ENCODE measurements at regions of chr17 and their contacts with region 1.

Region 1: GRCh38 chr17:67376737-67377487 is at the start of gene PITPNC1:
- DNase-seq: peak; percentile 82 to 90 (median 85)
- H3K4me3 ChIP-seq: peak within 1 kb of the TSS; percentile 84 to 94 (median 88)
- H3K27ac ChIP-seq: peak within 1 kb of the TSS; percentile 15 to 54
- H3K4me1 ChIP-seq: peaks cover 13 to 40% (median 39%) of the 10 kb centered on the region in 4 experiments
- H3K27me3 ChIP-seq: no peaks in the 10 kb centered on the region

Region 2: GRCh38 chr17:67366193-67367157 is 10.4 kb before region 1 on chr17 and contains the start of gene PSMD12:
- CTCF ChIA-PET with region 1: interaction called, 12 read pairs
- POLR2A ChIA-PET with region 1: interaction called, 5 read pairs
- DNase-seq: peak; percentile 90 to 94 (median 93)
- H3K4me3 ChIP-seq: peak within 1 kb of the TSS; percentile 87 to 99 (median 97)
- H3K27ac ChIP-seq: peak within 1 kb of the TSS; percentile 95 to 98
- H3K4me1 ChIP-seq: peaks cover 11 to 42% (median 32%) of the 10 kb centered on the region in 4 experiments
- H3K27me3 ChIP-seq: no peaks in the 10 kb centered on the region

Region 3: DNA sequence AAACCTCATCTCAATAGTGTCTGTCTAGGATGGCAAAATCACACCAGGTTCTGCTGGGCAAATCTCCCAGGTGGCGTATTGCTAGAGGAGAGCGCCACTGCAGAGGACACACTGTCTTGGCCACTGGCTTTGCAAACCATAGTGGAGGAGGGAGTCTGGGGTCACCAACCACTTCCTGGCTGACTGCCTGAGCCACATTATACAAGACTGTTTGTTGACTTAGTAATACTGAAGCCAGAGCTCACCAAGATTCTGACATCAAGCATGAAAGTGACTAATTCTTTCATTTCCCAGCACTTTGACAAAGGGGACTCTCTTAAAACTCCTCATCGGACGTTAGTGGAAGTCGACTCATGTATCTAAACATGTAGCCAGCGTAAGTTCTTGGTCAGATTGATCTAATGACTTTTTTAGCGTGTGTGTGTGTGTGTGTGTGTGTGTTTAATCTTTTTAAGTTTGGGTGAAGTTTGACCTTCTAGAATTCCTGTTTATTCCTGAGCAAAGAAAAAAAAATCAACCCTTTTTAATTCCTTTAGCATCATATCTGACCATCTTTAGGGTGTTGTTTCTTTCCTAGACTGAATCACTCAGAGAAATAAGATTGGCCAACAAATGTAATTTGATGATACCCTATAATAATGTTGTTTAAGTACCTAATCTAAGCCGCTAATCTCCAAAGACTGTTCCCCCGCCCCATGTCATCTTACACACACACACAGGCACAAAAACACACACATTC is 13.9 kb after region 1 on chr17:
- CTCF ChIA-PET with region 1: interaction called, 18 read pairs
- POLR2A ChIA-PET with region 1: no interaction called
- DNase-seq: peak in 2 of 3 donors; percentile 76 to 79
- H3K4me3 ChIP-seq: no peak overlapping the region
- H3K27ac ChIP-seq: no peak overlapping the region
- H3K4me1 ChIP-seq: peaks cover 4 to 14% (median 10%) of the 10 kb centered on the region in 4 experiments
- H3K27me3 ChIP-seq: no peaks in the 10 kb centered on the region

Region 4: GRCh38 chr17:67441052-67441927 is 64.4 kb after region 1 on chr17:
- CTCF ChIA-PET with region 1: interaction called, 18 read pairs
- POLR2A ChIA-PET with region 1: no interaction called
- DNase-seq: peak; percentile 37 to 84 (median 72)
- H3K4me3 ChIP-seq: peak overlapping the region in 3 of 7 experiments; percentile 4 to 16 (median 6)
- H3K27ac ChIP-seq: no peak overlapping the region
- H3K4me1 ChIP-seq: peaks cover 11 to 35% (median 30%) of the 10 kb centered on the region in 4 experiments
- H3K27me3 ChIP-seq: no peaks in the 10 kb centered on the region

Region 5: DNA sequence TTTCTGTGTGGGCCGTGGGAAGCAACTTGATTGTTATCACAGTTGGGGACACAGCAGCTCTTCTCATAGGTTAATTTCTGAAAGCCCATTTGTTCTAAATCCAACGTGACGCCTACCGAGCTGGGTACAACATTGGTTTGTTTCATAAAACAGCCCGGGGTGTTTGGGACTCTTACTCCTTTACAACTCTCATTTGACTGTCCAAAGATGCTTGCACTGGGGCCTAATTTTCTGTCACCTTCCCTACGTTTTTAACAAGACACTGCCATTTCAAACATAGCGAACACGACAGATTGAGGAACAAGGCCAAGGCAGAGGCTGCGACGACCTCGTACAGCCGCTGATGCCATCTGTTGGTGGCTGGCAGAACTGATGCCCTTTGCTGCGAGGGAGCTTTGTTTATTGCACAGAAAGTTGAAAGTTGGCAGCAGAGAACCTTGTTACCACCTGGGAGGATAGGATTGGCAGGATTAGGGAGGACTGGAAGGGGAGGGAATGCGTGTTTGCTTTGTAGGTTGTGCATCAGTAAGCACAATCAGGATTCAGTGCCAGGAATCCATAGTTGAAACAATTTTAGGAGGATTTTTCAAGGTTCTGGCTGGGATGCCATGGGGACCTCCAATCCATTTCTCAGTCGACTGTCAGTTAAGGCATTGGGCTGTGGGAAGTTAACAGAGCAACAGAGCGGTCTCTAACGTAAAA is 98.5 kb after region 1 on chr17:
- CTCF ChIA-PET with region 1: interaction called, 114 read pairs
- POLR2A ChIA-PET with region 1: no interaction called
- DNase-seq: peak; percentile 80 to 91 (median 89)
- H3K4me3 ChIP-seq: peak overlapping the region in 2 of 7 experiments; percentile 25 to 45
- H3K27ac ChIP-seq: no peak overlapping the region
- H3K4me1 ChIP-seq: peaks cover 6 to 16% (median 8%) of the 10 kb centered on the region in 4 experiments
- H3K27me3 ChIP-seq: no peaks in the 10 kb centered on the region

Measured in common myeloid progenitor, CD34-positive (primary cell).